Activated CD8-positive, alpha-beta T cell treated with anti-CD3 and anti-CD28 coated beads for 36 hours (primary cell): ENCODE measurements at regions of chr14 and their contacts with region 1.

Region 1: DNA sequence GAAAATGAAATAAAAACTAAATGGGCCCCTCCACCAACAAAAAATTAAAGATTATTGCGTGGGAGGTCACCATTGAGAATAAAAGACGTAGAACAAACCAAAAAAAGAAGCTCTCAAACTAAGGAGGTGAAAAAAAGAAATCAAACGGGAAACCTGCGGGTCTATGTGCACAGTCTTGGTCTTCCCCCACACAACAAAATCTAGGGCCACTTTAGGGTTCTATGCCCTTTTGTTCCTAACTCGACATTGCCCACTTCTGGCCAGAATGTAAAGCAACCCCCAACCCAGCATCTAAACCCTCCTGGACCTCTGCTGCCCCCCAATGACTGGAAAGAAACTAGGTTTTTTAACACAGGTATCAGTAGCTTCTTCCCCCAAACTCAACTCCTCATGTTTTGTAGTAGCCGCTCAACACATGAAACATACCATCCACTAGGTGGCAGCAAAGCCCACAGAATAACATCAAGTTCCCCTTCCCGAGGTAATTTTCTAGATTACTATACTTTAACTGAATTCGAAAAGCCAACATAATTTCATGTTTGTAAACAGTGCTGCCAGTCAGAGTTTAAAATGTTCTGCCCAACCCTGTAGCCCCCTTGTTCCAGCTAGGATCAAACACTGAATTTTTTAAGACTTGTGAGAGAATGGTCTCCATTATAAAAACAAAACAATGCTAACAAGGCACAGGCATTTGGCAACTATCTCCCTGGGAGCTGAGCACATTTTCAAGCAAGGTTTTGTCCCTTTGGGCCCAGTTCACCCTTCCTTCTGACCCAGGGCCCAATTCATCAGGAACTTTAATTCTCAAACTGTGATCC is 18.7 kb downstream of the DAD1 start:
- DNase-seq: peak; percentile 91
- ATAC-seq: peak; percentile 81
- H3K4me3 Mint-ChIP-seq: peak overlapping the region; percentile 86
- H3K27ac Mint-ChIP-seq: peak overlapping the region; percentile 94
- H3K4me1 Mint-ChIP-seq: peaks cover 60% of the 10 kb centered on the region
- H3K27me3 Mint-ChIP-seq: no peaks in the 10 kb centered on the region
- CTCF ChIP-seq: peak; percentile 91

Region 2: DNA sequence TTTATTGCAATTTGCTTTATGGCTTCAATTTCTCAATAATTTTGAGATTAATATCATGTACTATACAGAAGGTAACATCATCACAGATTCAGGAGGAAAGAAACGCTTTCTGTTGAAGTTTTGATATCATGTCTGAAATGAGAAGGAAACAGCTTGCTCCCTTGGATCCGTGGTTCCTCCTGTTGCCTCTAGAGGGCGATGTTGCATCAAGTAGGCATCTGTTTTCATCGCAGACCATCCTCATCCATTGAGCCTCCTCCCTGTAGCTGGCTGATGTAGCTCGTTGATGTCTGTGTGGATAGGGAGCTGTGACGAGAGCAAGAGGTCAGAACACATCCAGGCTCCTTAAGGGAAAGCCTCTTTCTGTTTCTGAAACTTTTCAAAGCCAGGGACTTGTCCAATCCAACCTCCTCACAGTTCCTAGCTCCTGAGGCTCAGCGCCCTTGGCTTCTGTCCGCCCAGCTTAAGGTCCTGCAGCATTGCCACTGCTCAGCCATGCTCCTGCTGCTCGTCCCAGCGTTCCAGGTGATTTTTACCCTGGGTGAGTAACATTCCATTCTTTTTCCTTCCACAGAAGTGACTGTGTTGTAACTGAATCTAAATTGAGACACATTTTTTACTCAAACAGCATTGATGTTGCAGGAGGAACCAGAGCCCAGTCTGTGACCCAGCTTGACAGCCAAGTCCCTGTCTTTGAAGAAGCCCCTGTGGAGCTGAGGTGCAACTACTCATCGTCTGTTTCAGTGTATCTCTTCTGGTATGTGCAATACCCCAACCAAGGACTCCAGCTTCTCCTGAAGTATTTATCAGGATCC is 592.0 kb before region 1 on chr14:
- CTCF ChIA-PET with region 1: interaction called, 19 read pairs
- POLR2A ChIA-PET with region 1: interaction called, 3 read pairs
- intact Hi-C with region 1: no loop called
- DNase-seq: peak; percentile 78
- ATAC-seq: peak; percentile 78
- H3K4me3 Mint-ChIP-seq: peak overlapping the region; percentile 78
- H3K27ac Mint-ChIP-seq: peak overlapping the region; percentile 63
- H3K4me1 Mint-ChIP-seq: peaks cover 21% of the 10 kb centered on the region
- H3K27me3 Mint-ChIP-seq: no peaks in the 10 kb centered on the region
- CTCF ChIP-seq: peak; percentile 67

Region 3: GRCh38 chr14:22200977-22201605 is 369.2 kb before region 1 on chr14:
- CTCF ChIA-PET with region 1: interaction called, 15 read pairs
- POLR2A ChIA-PET with region 1: no interaction called
- intact Hi-C with region 1: no loop called
- DNase-seq: peak; percentile 3
- ATAC-seq: peak; percentile 64
- H3K4me3 Mint-ChIP-seq: no peak overlapping the region
- H3K27ac Mint-ChIP-seq: no peak overlapping the region
- H3K4me1 Mint-ChIP-seq: peaks cover 13% of the 10 kb centered on the region
- H3K27me3 Mint-ChIP-seq: no peaks in the 10 kb centered on the region
- CTCF ChIP-seq: peak; percentile 28

Region 4: DNA sequence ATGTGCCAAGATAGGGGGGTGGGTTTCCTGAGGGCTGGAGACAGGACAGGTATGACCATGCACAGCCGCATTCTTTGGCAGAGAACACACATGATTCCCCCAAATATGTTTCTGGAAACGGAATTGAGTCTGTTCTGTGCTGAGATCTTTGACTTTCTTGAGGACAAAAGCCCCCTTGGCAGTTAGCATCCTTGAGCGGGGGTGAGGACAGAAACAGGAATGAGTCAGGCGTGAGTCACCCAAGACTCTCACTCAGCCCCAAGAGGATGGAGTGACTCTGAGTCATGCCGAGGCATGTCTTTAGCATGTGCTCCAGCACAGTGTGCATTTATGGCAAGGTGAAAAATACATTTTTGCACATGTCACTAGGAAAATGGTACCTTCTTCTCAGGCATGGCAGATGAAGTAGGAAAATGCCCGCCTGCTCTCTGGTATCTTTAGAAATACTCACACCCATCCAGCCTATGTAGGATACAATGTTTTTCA is 33.4 kb before region 1 on chr14:
- CTCF ChIA-PET with region 1: interaction called, 44 read pairs
- POLR2A ChIA-PET with region 1: interaction called, 200 read pairs
- intact Hi-C with region 1: no loop called
- DNase-seq: peak; percentile 96
- ATAC-seq: peak; percentile 86
- H3K4me3 Mint-ChIP-seq: peak overlapping the region; percentile 79
- H3K27ac Mint-ChIP-seq: peak overlapping the region; percentile 94
- H3K4me1 Mint-ChIP-seq: peaks cover 88% of the 10 kb centered on the region
- H3K27me3 Mint-ChIP-seq: no peaks in the 10 kb centered on the region
- CTCF ChIP-seq: no peak

Region 5: GRCh38 chr14:22646570-22647254 is 76.4 kb after region 1 on chr14:
- CTCF ChIA-PET with region 1: interaction called, 82 read pairs
- POLR2A ChIA-PET with region 1: interaction called, 4 read pairs
- intact Hi-C with region 1: loop called (anchors 5 kb)
- DNase-seq: no peak
- ATAC-seq: no peak
- H3K4me3 Mint-ChIP-seq: no peak overlapping the region
- H3K27ac Mint-ChIP-seq: peak overlapping the region; percentile 36
- H3K4me1 Mint-ChIP-seq: peaks cover 5% of the 10 kb centered on the region
- H3K27me3 Mint-ChIP-seq: peaks cover 2% of the 10 kb centered on the region
- CTCF ChIP-seq: no peak

Region 6: GRCh38 chr14:22852940-22853767 is 282.8 kb after region 1 on chr14:
- CTCF ChIA-PET with region 1: interaction called, 73 read pairs
- POLR2A ChIA-PET with region 1: interaction called, 5 read pairs
- intact Hi-C with region 1: loop called (anchors 5 kb)
- DNase-seq: peak; percentile 96
- ATAC-seq: peak; percentile 82
- H3K4me3 Mint-ChIP-seq: peak overlapping the region; percentile 71
- H3K27ac Mint-ChIP-seq: peak overlapping the region; percentile 79
- H3K4me1 Mint-ChIP-seq: peaks cover 15% of the 10 kb centered on the region
- H3K27me3 Mint-ChIP-seq: peaks cover 13% of the 10 kb centered on the region
- CTCF ChIP-seq: peak; percentile 92

Region 7: GRCh38 chr14:22986508-22987054 is 416.2 kb after region 1 on chr14:
- CTCF ChIA-PET with region 1: interaction called, 15 read pairs
- POLR2A ChIA-PET with region 1: no interaction called
- intact Hi-C with region 1: no loop called
- DNase-seq: peak; percentile 95
- ATAC-seq: peak; percentile 61
- H3K4me3 Mint-ChIP-seq: no peak overlapping the region
- H3K27ac Mint-ChIP-seq: no peak overlapping the region
- H3K4me1 Mint-ChIP-seq: no peaks in the 10 kb centered on the region
- H3K27me3 Mint-ChIP-seq: no peaks in the 10 kb centered on the region
- CTCF ChIP-seq: peak; percentile 94